A673 (cell line): ENCODE measurements at regions of chr1 and their contacts with region 1.

Region 1: DNA sequence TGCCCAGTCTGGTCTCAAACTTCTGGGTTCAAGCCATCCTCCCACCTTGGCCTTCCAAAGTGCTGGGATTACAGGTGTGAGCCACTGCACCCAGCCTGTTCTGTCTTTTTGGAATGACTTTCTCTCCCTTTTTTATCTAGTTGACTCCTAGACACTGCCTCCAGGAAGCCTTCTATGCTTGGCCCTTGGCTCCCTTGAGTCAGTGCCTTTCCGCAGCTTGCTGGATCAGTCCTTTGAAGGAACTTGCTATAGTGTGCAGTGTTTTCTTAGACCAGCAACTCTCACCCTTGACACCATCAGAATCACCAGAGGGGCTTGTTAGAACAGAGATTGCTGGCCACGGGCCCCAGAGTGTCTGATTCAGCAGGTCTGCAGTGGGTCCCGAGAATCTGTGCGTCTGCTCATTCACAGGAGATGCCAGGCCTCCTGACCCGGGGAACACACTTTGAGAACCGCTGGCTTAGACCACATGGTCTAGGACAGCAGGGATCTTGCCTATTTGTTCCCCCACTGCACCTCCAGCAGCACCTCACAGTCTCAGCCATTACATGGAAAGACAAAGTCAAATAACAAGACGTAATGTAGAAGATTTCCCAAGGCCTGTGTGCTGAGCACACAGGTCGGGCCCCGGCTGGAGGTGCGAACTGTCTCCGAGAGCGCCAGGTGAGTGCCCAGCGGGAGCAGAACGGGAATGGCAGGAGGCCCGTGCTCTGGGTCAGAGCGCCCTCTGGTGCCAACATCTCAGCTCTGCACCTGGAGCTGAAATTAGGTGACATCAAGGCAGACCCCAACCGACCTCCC is 27.4 kb upstream of the CTPS1 start:
- DNase-seq: peak; percentile 62
- H3K4me3 ChIP-seq: no peak overlapping the region
- H3K27ac ChIP-seq: no peak overlapping the region
- H3K4me1 ChIP-seq: peaks cover 4% of the 10 kb centered on the region
- H3K27me3 ChIP-seq: no peaks in the 10 kb centered on the region
- CTCF ChIP-seq: peak; percentile 94

Region 2: GRCh38 chr1:40592107-40592803 is 359.9 kb before region 1 on chr1:
- CTCF ChIA-PET with region 1: no interaction called
- POLR2A ChIA-PET with region 1: no interaction called
- intact Hi-C with region 1: loop called (anchors 1 kb)
- DNase-seq: peak; percentile 62
- H3K4me3 ChIP-seq: no peak overlapping the region
- H3K27ac ChIP-seq: no peak overlapping the region
- H3K4me1 ChIP-seq: no peaks in the 10 kb centered on the region
- H3K27me3 ChIP-seq: no peaks in the 10 kb centered on the region
- CTCF ChIP-seq: peak; percentile 76

Region 3: DNA sequence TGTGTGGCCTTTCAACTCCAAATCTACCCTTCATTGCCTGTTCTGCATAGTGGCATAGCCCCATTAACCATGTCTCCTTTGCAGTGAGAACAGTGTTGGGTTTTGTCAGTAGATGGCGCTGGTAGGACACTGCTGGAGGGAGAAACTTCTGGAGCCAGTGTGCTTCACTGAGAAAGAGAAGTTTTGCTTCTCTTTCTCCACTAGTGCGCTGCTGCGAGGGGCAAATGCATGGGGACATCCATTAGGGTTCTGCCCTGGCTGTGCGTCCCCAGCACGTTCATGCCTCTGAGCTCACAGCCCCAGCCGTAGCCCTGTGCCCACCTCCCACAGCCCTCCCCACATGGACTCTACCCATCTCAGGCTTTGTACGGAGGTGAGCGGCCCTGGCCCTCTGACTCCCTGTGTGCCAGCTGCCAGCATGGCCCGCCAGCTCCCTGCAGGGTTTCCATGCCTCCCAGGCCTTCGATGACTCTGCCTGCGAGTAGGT is 339.8 kb before region 1 on chr1:
- CTCF ChIA-PET with region 1: no interaction called
- POLR2A ChIA-PET with region 1: no interaction called
- intact Hi-C with region 1: loop called (anchors 5 kb)
- DNase-seq: peak; percentile 83
- H3K4me3 ChIP-seq: no peak overlapping the region
- H3K27ac ChIP-seq: no peak overlapping the region
- H3K4me1 ChIP-seq: no peaks in the 10 kb centered on the region
- H3K27me3 ChIP-seq: no peaks in the 10 kb centered on the region
- CTCF ChIP-seq: peak; percentile 92

Region 4: GRCh38 chr1:40763742-40764532 is 188.2 kb before region 1 on chr1:
- CTCF ChIA-PET with region 1: no interaction called
- POLR2A ChIA-PET with region 1: no interaction called
- intact Hi-C with region 1: no loop called
- DNase-seq: peak; percentile 46
- H3K4me3 ChIP-seq: no peak overlapping the region
- H3K27ac ChIP-seq: peak overlapping the region; percentile 55
- H3K4me1 ChIP-seq: peaks cover 15% of the 10 kb centered on the region
- H3K27me3 ChIP-seq: no peaks in the 10 kb centered on the region
- CTCF ChIP-seq: no peak

Region 5: GRCh38 chr1:40774266-40774998 is 177.7 kb before region 1 on chr1:
- CTCF ChIA-PET with region 1: interaction called, 5 read pairs
- POLR2A ChIA-PET with region 1: no interaction called
- intact Hi-C with region 1: loop called (anchors 5 kb)
- DNase-seq: peak; percentile 49
- H3K4me3 ChIP-seq: no peak overlapping the region
- H3K27ac ChIP-seq: no peak overlapping the region
- H3K4me1 ChIP-seq: no peaks in the 10 kb centered on the region
- H3K27me3 ChIP-seq: no peaks in the 10 kb centered on the region
- CTCF ChIP-seq: peak; percentile 87

Region 6: DNA sequence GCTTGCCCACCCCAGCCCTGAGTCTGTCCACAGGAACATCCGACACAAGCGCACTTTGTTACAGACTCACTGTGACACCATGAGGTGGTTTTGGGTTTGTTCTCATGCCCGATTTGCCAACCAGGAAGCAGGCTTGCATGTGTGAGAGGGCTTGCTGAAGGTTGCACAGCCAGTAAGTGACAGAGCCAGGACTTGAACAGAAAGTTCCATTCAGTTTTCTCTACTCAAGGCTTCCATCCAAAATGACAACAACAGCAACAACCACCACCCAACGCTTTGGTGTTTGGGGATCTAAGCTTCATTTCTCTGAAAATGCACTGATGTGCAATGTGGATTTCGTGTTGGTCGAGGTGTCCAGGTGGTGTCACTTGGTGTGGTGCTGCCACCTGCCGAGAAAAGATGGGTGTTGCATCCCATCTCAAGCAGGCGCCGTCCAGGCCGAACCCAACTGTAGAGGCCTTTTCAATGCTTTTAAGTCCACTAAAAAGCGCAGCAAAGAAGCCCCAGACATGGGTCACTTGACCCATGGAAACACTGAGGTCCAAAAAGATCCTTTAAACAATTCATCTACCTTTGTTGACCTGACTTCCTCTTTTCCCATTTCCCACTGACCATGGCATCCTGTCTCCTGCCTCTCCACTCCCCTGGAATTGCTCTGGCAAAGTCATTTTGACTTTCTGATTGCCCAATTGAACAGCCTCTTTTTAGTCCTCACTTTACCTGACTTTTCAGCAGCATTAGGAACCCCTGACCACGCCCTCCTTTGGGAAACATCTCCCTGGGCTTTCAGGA is 102.1 kb before region 1 on chr1:
- CTCF ChIA-PET with region 1: interaction called, 22 read pairs
- POLR2A ChIA-PET with region 1: no interaction called
- intact Hi-C with region 1: loop called (anchors 1 kb)
- DNase-seq: peak; percentile 73
- H3K4me3 ChIP-seq: no peak overlapping the region
- H3K27ac ChIP-seq: no peak overlapping the region
- H3K4me1 ChIP-seq: no peaks in the 10 kb centered on the region
- H3K27me3 ChIP-seq: no peaks in the 10 kb centered on the region
- CTCF ChIP-seq: peak; percentile 89